HepG2 (cell line): ENCODE measurements at regions of chr10 and their contacts with region 1.

Region 1: GRCh38 chr10:24724381-24725228 is 918 bp upstream of the ARHGAP21 start:
- DNase-seq: peak; percentile 94
- ATAC-seq: peak; percentile 81
- H3K4me3 ChIP-seq: peak overlapping the region; percentile 73 to 83 (median 83)
- H3K27ac ChIP-seq: peak overlapping the region; percentile 81
- H3K4me1 ChIP-seq: peaks cover 31% of the 10 kb centered on the region
- H3K27me3 ChIP-seq: no peaks in the 10 kb centered on the region
- CTCF ChIP-seq: no peak
- EP300 ChIP-seq: no peak
- POLR2A ChIP-seq: peak; percentile 87 to 91
- RAD21 ChIP-seq: no peak

Region 2: DNA sequence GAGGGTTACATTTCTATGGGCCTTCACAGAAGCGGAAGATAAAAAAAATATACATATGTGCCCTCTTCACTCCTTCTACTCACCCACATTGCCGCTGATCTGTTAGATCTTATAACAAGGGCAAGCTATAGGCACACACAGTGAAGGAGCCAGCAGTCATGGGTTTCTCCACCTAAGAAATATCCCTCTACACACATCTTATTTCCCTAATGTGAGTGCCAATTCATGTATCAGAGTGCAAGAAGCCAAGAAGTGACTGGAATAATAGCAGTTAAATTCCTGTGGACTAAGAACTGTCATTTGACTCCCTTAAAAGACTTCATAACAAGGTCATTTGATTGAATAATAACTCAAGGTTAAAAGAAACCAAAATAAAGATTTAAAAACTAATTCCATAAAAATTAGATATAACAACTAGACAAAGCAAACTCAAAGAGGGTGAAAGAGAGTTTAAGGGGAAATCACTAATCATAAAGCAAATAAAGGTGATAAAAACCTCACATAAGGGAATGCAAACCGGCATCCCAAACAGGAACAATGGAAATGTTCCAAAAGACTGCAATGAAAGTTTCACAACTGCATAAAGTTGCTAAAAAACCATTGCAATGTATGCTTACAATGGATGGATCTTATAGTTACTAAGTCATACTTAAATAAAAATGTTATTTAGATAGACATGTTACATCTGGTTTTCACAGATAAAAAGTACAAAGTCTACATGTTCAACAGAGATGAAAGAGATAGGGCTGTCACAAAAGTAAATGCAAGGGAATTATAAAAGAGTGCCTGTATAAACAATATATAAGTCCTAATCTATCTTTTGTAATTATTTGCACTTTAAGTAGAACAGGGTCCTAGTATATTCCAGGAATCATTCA is 43.7 kb before region 1 on chr10:
- CTCF ChIA-PET with region 1: no interaction called
- POLR2A ChIA-PET with region 1: no interaction called
- in situ Hi-C with region 1: no loop called
- intact Hi-C with region 1: loop called (anchors 1 kb)
- DNase-seq: peak; percentile 88
- ATAC-seq: peak; percentile 74
- H3K4me3 ChIP-seq: 0 out of 6 replicates have a peak overlapping the region, but pooled peaks of 1 of the 3 experiments have one; percentile 15
- H3K27ac ChIP-seq: peak overlapping the region; percentile 55
- H3K4me1 ChIP-seq: peaks cover 22% of the 10 kb centered on the region
- H3K27me3 ChIP-seq: no peaks in the 10 kb centered on the region
- CTCF ChIP-seq: no peak
- EP300 ChIP-seq: no peak
- POLR2A ChIP-seq: no peak
- RAD21 ChIP-seq: no peak

Region 3: GRCh38 chr10:24706479-24707118 is 18.0 kb before region 1 on chr10:
- CTCF ChIA-PET with region 1: no interaction called
- POLR2A ChIA-PET with region 1: interaction called, 4 read pairs
- in situ Hi-C with region 1: no loop called
- intact Hi-C with region 1: loop called (anchors 2 kb)
- DNase-seq: peak; percentile 63
- ATAC-seq: peak; percentile 92
- H3K4me3 ChIP-seq: no peak overlapping the region
- H3K27ac ChIP-seq: no peak overlapping the region
- H3K4me1 ChIP-seq: peaks cover 30% of the 10 kb centered on the region
- H3K27me3 ChIP-seq: no peaks in the 10 kb centered on the region
- CTCF ChIP-seq: no peak
- EP300 ChIP-seq: no peak
- POLR2A ChIP-seq: no peak
- RAD21 ChIP-seq: no peak

Region 4: GRCh38 chr10:24826019-24826418 is 101.4 kb after region 1 on chr10:
- CTCF ChIA-PET with region 1: no interaction called
- POLR2A ChIA-PET with region 1: no interaction called
- in situ Hi-C with region 1: no loop called
- intact Hi-C with region 1: no loop called
- DNase-seq: no peak
- ATAC-seq: no peak
- H3K4me3 ChIP-seq: no peak overlapping the region
- H3K27ac ChIP-seq: no peak overlapping the region
- H3K4me1 ChIP-seq: no peaks in the 10 kb centered on the region
- H3K27me3 ChIP-seq: no peaks in the 10 kb centered on the region
- CTCF ChIP-seq: no peak
- EP300 ChIP-seq: no peak
- POLR2A ChIP-seq: no peak
- RAD21 ChIP-seq: no peak

Region 5: GRCh38 chr10:25016376-25017154 is 292.0 kb after region 1 on chr10 and contains the start of gene THNSL1:
- CTCF ChIA-PET with region 1: no interaction called
- POLR2A ChIA-PET with region 1: interaction called, 4 read pairs
- in situ Hi-C with region 1: loop called (anchors 10 kb)
- intact Hi-C with region 1: loop called (anchors 5 kb)
- DNase-seq: peak; percentile 97
- ATAC-seq: peak; percentile 99
- H3K4me3 ChIP-seq: peak within 1 kb of the TSS; percentile 64 to 84 (median 71)
- H3K27ac ChIP-seq: peak within 1 kb of the TSS; percentile 100
- H3K4me1 ChIP-seq: peaks cover 32% of the 10 kb centered on the region
- H3K27me3 ChIP-seq: no peaks in the 10 kb centered on the region
- CTCF ChIP-seq: no peak
- EP300 ChIP-seq: no peak; a peak in 1 of 4 replicates
- POLR2A ChIP-seq: peak; percentile 96 to 99
- RAD21 ChIP-seq: peak; percentile 53
- total RNA-seq, gene THNSL1: 3.8 and 7.3 TPM in 2 replicates

Region 6: DNA sequence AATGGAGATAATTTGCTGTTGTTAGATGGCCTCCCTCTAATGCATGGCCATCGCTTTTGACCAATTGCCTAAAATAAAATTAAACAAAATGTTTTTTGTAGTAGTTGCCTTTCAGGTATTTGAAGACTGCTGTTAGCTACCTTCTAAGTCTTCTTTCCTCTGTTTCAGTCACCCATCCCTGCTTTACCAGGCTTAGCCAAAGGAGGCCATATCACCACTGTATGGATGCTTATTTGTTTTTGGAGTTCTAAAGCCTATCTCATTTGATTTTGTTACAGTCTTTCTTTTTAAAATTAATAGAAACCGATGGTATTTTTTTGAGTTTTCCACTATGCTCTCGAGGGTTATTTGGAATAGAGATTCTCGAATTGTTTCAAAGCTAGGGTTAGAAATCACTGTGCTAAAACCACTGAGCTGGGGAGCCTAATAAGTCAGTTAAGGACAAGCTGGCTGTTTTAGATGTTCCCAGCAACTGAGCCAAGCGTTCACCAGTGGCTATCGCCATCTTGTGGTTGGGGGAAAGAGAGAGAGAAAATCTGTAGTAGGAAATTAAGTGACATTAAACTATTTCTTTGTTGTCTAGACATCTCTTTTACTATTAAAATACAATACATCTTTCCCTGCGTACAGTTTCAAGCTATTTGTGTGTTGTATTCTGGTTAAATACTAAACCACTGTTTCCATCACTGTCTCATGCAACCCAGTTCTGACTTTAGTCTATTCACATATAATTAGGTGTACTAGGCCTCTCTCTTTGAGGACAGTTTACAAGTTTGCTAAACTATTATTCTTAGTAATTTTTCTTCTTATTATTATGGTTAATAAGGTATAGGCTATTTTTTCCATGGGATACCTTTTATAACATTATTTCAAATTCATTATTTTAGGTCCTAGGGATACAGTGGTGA is 502.4 kb after region 1 on chr10:
- CTCF ChIA-PET with region 1: no interaction called
- POLR2A ChIA-PET with region 1: no interaction called
- in situ Hi-C with region 1: no loop called
- intact Hi-C with region 1: loop called (anchors 5 kb)
- DNase-seq: peak; percentile 21
- ATAC-seq: peak; percentile 69
- H3K4me3 ChIP-seq: no peak overlapping the region
- H3K27ac ChIP-seq: no peak overlapping the region
- H3K4me1 ChIP-seq: no peaks in the 10 kb centered on the region
- H3K27me3 ChIP-seq: no peaks in the 10 kb centered on the region
- CTCF ChIP-seq: peak; percentile 78
- EP300 ChIP-seq: no peak
- POLR2A ChIP-seq: no peak
- RAD21 ChIP-seq: 0 out of 2 replicates have a peak, but pooled peaks have one; percentile 32